CD4-positive, alpha-beta memory T cell (primary cell): ENCODE measurements at regions of chr17 and their contacts with region 1.

Region 1: DNA sequence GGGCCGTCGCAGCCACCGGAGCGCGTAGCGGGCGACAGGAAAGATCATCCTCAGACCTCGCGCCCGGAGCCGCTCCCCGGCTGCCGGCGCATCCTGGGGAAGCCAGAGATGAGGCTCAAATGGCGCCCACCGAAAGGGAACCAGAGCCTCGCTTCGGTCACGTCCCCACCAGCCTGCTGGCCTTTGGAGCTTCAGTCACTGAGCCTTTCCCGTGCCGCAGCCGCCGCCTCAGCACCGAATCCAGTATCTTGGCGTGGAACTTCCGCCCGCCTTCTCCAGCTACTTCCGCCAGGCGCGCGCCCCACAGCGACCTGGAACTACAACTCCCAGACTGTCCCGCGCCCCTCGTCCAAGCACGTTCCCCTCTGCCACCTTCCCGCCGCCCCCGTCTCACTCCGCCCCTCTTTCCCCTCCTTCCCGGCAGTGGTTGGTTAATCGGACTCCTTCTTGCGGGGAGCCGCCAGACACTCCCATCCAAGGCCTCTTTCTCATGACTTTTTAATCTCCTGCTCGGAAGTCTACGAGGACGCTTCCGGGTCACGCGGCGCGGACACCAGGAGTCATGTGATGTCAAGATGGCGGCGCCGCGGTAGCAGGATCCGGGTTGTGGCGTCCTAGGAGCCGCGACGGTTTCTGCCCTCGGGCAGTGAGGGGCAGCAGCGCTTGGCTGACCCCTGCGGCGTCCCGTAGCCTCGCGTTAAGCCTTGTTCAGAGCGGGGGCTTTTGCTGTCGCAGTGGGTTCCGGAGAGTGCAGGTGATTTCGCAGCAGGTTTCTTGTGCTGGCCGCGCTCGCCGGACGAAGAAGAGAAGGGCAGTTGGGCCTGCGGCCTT is at the starts of genes SMCR8 and TOP3A:
- DNase-seq: peak; percentile 96 to 100 (median 98)
- H3K4me3 ChIP-seq: peak within 1 kb of the TSS; percentile 96 to 97
- H3K4me3 Mint-ChIP-seq: peak within 1 kb of the TSS; percentile 92 to 98 (median 96)
- H3K27ac ChIP-seq: peak within 1 kb of the TSS; percentile 93
- H3K27ac Mint-ChIP-seq: peak within 1 kb of the TSS; percentile 92 to 99 (median 98)
- H3K4me1 ChIP-seq: peaks cover 75% of the 10 kb centered on the region
- H3K4me1 Mint-ChIP-seq: peaks cover 53 to 92% (median 74%) of the 10 kb centered on the region in 4 donors
- H3K27me3 ChIP-seq: no peaks in the 10 kb centered on the region
- H3K27me3 Mint-ChIP-seq: no peaks in the 10 kb centered on the region
- total RNA-seq, gene SMCR8: 49.7 to 51.3 TPM
- total RNA-seq, gene TOP3A: 43.8 to 55.2 TPM

Region 2: DNA sequence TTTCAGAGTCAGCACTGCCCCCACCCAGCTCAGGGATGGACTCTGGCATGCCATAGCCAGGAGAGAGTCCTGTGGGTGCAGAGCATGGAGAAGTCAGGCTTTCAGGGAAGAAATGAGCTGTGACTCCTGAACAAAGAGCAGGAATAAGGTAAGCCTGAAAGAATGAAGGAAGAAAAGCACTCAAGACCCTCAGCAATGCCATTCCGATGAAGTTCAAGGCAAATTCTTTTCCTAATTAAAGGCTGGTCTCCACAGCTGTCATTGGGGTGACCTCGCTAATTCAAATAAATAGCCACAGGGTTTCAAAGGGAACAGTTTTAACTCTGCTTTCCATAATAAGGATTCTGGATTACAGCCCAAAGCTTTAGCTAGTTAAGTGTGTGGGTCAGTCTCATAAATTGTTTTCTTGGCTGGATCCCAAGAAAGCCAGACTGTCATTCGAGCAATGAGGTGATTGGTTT is 374.5 kb before region 1 on chr17:
- CTCF ChIA-PET with region 1: no interaction called
- POLR2A ChIA-PET with region 1: no interaction called
- intact Hi-C with region 1: no loop called
- DNase-seq: no peak
- H3K4me3 ChIP-seq: no peak overlapping the region
- H3K4me3 Mint-ChIP-seq: no peak overlapping the region
- H3K27ac ChIP-seq: no peak overlapping the region
- H3K27ac Mint-ChIP-seq: peak overlapping the region in 1 of 7 donors; percentile 39
- H3K4me1 ChIP-seq: peaks cover 28% of the 10 kb centered on the region
- H3K4me1 Mint-ChIP-seq: peaks cover 27 to 42% (median 36%) of the 10 kb centered on the region in 4 donors
- H3K27me3 ChIP-seq: no peaks in the 10 kb centered on the region
- H3K27me3 Mint-ChIP-seq: no peaks in the 10 kb centered on the region

Region 3: DNA sequence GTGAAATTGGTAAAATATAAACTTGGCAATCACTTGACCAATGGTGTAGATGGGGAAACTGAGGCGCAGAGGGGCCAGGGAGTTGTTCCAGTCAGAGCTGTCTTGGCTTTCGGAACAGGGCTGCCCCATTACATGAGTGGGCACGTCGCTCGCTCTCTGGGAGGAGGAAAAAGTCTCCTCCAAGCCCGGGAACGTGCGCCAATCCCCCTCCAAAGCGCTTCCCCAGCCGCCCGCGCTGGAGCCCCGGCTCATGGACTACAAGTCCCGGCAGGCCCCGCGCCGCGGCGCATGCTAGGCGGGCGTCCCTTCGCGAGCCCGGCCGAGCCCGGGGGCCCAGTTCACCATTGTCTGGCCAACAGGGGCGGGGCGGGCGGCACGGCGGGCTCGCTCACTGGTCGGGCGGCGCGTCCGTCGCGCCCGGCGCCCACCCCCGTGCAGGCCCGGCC is 89.8 kb before region 1 on chr17:
- CTCF ChIA-PET with region 1: no interaction called
- POLR2A ChIA-PET with region 1: no interaction called
- intact Hi-C with region 1: loop called (anchors 1 kb)
- DNase-seq: peak; percentile 94 to 96 (median 96)
- H3K4me3 ChIP-seq: no peak overlapping the region
- H3K4me3 Mint-ChIP-seq: peak overlapping the region in 7 of 8 donors; percentile 41 to 71 (median 65)
- H3K27ac ChIP-seq: peak overlapping the region; percentile 15
- H3K27ac Mint-ChIP-seq: peak overlapping the region in 3 of 7 donors; percentile 59 to 92 (median 82)
- H3K4me1 ChIP-seq: peaks cover 28% of the 10 kb centered on the region
- H3K4me1 Mint-ChIP-seq: peaks cover 15 to 39% (median 21%) of the 10 kb centered on the region in 4 donors
- H3K27me3 ChIP-seq: no peaks in the 10 kb centered on the region
- H3K27me3 Mint-ChIP-seq: no peaks in the 10 kb centered on the region

Region 4: DNA sequence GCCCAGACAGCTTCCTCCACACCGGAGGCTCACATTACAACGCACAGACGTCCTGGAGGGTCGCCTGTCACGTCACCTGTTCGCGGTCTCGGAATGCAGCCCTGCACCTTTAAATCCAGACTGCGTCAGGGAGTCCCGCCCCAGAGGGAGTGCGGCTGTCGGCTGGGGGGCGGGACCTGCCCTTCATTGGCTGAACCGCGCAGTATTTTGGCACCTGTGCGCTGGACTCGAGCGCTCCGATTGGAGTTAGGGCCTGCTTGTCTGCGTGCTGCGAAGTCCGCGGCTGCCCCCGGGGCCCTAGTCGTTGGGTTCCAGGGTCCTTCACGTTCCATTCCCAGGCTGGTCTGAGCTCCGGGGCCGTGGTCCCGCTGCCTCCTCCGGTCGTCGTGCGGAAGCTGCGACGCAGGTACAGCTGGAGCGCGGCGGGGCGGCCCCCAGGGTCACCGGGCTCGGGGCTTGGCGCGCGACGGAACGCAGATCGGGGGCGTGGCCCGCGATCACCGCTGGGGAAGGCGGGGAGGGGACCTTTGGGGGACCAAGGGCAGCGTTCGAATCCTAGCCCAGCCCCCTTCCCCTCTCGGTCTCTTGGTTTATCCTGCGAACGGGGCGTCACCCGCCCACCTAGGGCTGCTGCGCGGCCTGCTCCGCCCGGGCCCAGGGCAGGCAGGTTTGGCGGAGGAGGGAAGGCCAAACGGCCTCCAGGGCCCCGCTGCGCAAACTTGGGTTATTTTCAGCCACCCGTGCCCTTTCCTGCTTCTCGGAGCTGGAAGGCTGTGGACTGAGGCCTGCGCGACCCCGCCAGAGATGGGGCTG is 54.4 kb before region 1 on chr17 and contains the start of gene MIEF2:
- CTCF ChIA-PET with region 1: no interaction called
- POLR2A ChIA-PET with region 1: interaction called, 31 read pairs
- intact Hi-C with region 1: loop called (anchors 1 kb)
- DNase-seq: peak; percentile 90 to 94 (median 92)
- H3K4me3 ChIP-seq: peak within 1 kb of the TSS; percentile 66 to 91
- H3K4me3 Mint-ChIP-seq: peak within 1 kb of the TSS; percentile 80 to 90 (median 82)
- H3K27ac ChIP-seq: peak within 1 kb of the TSS; percentile 96
- H3K27ac Mint-ChIP-seq: peak within 1 kb of the TSS; percentile 86 to 94 (median 89)
- H3K4me1 ChIP-seq: peaks cover 53% of the 10 kb centered on the region
- H3K4me1 Mint-ChIP-seq: peaks cover 17 to 56% (median 37%) of the 10 kb centered on the region in 4 donors
- H3K27me3 ChIP-seq: no peaks in the 10 kb centered on the region
- H3K27me3 Mint-ChIP-seq: no peaks in the 10 kb centered on the region
- total RNA-seq, gene MIEF2: 18.2 to 19.3 TPM

Region 5: DNA sequence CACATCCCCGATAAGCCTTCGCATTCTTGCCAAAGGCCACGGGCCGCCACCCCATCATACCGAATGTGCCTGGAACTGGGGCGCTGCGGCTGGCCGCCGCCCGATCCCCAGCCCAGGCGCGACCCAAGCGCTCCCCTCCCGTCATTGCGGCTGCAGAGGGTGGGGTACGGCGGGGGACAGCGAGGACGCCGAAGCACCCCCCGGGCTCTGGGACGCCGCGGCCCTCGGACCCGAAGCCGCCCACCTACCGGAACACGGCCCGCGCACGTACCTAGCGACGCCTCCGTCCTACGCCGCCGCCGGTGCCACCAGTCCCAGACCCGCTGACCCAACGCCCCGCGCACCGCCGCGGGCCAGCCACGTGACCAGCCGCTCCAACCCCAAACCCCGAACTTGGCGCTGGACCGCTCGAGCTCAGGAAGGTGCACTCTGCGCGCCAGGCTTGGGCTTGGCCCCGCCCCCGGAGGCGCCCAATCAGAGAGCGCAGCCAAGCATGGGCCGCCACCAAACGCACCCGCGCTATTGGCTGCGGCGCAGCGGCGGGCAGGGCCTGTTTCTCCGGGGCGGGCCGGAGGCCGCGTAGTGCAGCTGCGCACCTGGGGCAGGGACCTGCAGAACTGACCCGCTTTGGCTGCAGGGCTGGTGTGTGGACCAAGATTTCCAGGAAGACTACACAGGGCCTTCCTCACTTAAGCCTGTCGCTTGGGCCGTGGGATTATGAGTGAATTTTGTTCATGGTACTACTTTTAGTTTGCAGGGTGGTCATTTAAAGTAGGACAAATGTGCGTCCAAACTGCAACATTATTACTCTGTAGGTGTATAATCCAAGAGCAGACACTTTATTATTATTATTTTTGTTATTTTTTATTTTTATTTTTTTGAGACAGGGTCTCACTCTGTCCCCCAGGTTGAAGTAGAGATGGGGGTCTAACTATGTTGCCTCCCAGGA is 48.4 kb after region 1 on chr17 and contains the start of gene SHMT1:
- CTCF ChIA-PET with region 1: no interaction called
- POLR2A ChIA-PET with region 1: interaction called, 13 read pairs
- intact Hi-C with region 1: loop called (anchors 1 kb)
- DNase-seq: peak; percentile 87 to 90 (median 88)
- H3K4me3 ChIP-seq: peak within 1 kb of the TSS; percentile 54 to 76
- H3K4me3 Mint-ChIP-seq: peak within 1 kb of the TSS; percentile 90 to 96 (median 94)
- H3K27ac ChIP-seq: peak within 1 kb of the TSS; percentile 59
- H3K27ac Mint-ChIP-seq: peak within 1 kb of the TSS; percentile 58 to 93 (median 89)
- H3K4me1 ChIP-seq: peaks cover 10% of the 10 kb centered on the region
- H3K4me1 Mint-ChIP-seq: peaks cover 6 to 19% (median 16%) of the 10 kb centered on the region in 4 donors
- H3K27me3 ChIP-seq: no peaks in the 10 kb centered on the region
- H3K27me3 Mint-ChIP-seq: no peaks in the 10 kb centered on the region
- total RNA-seq, gene SHMT1: 14.6 to 15.9 TPM